ENCODE measurements at regions of chr2 and their contacts with region 1.

Region 1: DNA sequence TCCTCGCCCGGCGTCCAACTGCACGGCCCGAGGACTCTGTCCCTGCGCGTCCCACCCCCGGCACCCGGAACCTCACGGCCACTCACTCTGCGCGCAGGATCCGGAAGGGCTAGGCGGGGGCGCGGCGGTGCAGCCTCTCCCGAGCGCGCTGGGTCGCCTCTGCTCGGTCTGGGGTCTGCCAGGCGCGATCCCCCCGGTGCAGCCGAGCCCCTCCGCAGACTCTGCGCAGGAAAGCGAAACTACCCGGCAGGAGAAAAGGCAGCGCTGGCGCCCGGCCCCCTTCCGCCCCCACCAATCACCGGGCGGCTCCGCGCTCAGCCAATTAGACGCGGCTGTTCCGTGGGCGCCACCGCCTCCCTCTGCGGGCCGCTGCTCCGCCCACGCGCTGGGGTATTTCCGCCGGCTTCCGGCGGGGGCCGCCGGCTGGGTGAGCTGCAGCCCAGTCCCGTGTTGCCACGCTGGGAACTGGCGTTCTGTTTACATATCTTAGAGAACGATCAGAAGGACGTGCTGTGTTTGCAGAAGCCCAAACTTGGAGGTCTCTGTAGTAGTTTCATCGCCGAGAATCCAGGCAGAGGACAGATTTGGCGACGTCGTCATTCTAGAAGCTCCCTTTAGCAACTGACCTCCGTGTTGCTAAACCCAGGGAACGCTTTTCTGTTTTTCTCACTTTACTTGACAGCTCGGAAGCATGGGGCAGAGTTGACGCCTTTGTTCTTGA is at the start of gene STAT1:
- DNase-seq: peak; percentile 96
- H3K4me3 Mint-ChIP-seq: no peak within 1 kb of the TSS
- H3K27ac Mint-ChIP-seq: no peak within 1 kb of the TSS
- H3K4me1 Mint-ChIP-seq: peaks cover 44% of the 10 kb centered on the region
- H3K27me3 Mint-ChIP-seq: no peaks in the 10 kb centered on the region
- total RNA-seq, gene STAT1: 540 to 547 TPM

Region 2: GRCh38 chr2:190812506-190813294 is 201.4 kb before region 1 on chr2:
- CTCF ChIA-PET with region 1: no interaction called
- POLR2A ChIA-PET with region 1: no interaction called
- DNase-seq: no peak
- H3K4me3 Mint-ChIP-seq: no peak overlapping the region
- H3K27ac Mint-ChIP-seq: no peak overlapping the region
- H3K4me1 Mint-ChIP-seq: peaks cover 2% of the 10 kb centered on the region
- H3K27me3 Mint-ChIP-seq: no peaks in the 10 kb centered on the region

Region 3: GRCh38 chr2:190974631-190975361 is 39.3 kb before region 1 on chr2:
- CTCF ChIA-PET with region 1: no interaction called
- POLR2A ChIA-PET with region 1: interaction called, 14 read pairs
- DNase-seq: no peak
- H3K4me3 Mint-ChIP-seq: no peak overlapping the region
- H3K27ac Mint-ChIP-seq: peak overlapping the region; percentile 21
- H3K4me1 Mint-ChIP-seq: peaks cover 39% of the 10 kb centered on the region
- H3K27me3 Mint-ChIP-seq: no peaks in the 10 kb centered on the region

Region 4: DNA sequence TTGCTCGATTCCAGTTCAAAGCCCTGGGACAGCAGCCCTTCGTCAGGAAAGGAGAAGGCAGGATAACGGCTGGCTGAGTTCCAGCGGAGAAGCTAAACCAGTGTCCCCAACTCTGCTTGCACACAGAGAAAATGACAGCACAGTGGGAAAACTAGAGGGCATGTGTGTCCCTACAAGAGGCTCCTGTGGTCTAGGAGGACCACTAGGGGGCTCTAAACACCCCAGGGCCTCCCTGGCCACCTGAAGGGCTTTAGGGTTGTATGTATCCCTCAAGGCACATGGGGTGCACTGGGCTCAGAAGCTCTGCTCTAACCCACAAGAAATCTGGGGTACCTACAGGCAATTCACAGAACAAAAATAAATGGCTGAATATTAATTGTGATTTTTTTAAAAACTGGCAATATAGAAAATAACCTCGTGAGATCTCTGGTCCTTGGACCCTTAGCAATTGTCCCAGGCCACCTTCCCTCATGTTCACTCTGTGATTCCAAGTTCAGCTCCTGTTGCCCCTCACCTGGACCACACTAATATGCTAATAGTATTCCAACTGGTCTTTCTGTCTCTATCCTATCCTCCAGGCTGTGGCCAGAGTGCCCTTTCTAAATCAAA is 17.6 kb before region 1 on chr2:
- CTCF ChIA-PET with region 1: interaction called, 4 read pairs
- POLR2A ChIA-PET with region 1: interaction called, 26 read pairs
- DNase-seq: peak; percentile 34
- H3K4me3 Mint-ChIP-seq: no peak overlapping the region
- H3K27ac Mint-ChIP-seq: peak overlapping the region; percentile 71
- H3K4me1 Mint-ChIP-seq: peaks cover 80% of the 10 kb centered on the region
- H3K27me3 Mint-ChIP-seq: no peaks in the 10 kb centered on the region

Region 5: GRCh38 chr2:191038241-191038725 is 24.2 kb after region 1 on chr2:
- CTCF ChIA-PET with region 1: interaction called, 6 read pairs
- POLR2A ChIA-PET with region 1: interaction called, 59 read pairs
- DNase-seq: peak; percentile 69
- H3K4me3 Mint-ChIP-seq: peak overlapping the region; percentile 29
- H3K27ac Mint-ChIP-seq: peak overlapping the region; percentile 88
- H3K4me1 Mint-ChIP-seq: peaks cover 49% of the 10 kb centered on the region
- H3K27me3 Mint-ChIP-seq: no peaks in the 10 kb centered on the region

Region 6: DNA sequence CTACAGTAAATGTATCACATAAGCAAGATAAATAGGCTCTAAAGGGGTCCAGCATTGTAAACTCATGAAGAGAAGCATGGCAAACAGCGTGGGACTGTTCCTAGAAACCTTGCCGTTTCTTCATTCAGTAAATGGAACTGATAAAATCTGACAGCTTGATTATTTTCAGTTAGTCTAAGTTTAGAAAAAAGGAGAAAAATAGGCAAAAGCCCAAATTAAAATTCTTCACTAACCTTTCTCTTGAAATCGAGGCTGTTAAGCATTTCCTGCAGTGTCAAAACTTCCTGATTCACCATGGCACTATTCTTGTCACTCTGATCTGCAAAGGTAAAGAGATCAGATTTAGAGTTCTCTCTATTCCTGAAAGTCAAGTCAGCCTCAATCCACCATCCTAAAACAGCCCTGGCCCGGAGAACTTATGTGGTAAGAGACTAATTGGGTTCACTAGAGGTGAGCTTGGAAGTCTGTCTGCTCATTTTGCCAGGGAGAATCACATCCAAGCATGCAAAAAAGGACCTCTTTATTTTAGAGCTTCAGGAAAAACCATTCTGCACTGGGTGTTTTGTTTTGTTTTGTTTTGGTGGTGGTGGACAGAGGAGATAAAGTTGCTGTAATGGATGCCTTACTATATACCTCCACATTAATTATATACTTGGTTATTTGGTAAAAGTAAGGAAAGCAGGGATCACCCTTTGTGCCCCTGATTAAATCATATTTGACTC is 52.3 kb after region 1 on chr2:
- CTCF ChIA-PET with region 1: no interaction called
- POLR2A ChIA-PET with region 1: interaction called, 76 read pairs
- DNase-seq: peak; percentile 23
- H3K4me3 Mint-ChIP-seq: peak overlapping the region; percentile 80
- H3K27ac Mint-ChIP-seq: peak overlapping the region; percentile 84
- H3K4me1 Mint-ChIP-seq: peaks cover 78% of the 10 kb centered on the region
- H3K27me3 Mint-ChIP-seq: no peaks in the 10 kb centered on the region

Measured in activated CD4-positive, alpha-beta memory T cell treated with anti-CD3 and anti-CD28 coated beads, Interleukin-2, amount 10 ng/mL, durations not matched to agents 7 days and 5 days (primary cell).